ENCODE measurements at regions of chr20 and their contacts with region 1.

Region 1: GRCh38 chr20:20052074-20052970 is at the starts of genes CFAP61 and CRNKL1:
- DNase-seq: peak; percentile 96 to 100
- ATAC-seq: peak; percentile 91 to 95 (median 93)
- H3K4me3 ChIP-seq: peak within 1 kb of the TSS; percentile 66
- H3K4me3 Mint-ChIP-seq: peak within 1 kb of the TSS; percentile 100
- H3K27ac ChIP-seq: peak within 1 kb of the TSS; percentile 73
- H3K27ac Mint-ChIP-seq: peak within 1 kb of the TSS; percentile 99
- H3K4me1 ChIP-seq: peaks cover 6% of the 10 kb centered on the region
- H3K4me1 Mint-ChIP-seq: peaks cover 17 to 27% of the 10 kb centered on the region in 2 donors
- H3K27me3 ChIP-seq: no peaks in the 10 kb centered on the region
- H3K27me3 Mint-ChIP-seq: peaks cover 0 to 4% of the 10 kb centered on the region in 2 donors
- CTCF ChIP-seq: no peak
- total RNA-seq, gene CFAP61: 1.0 to 2.1 (median 1.3) TPM
- total RNA-seq, gene CRNKL1: 30.8 to 34.5 (median 31.6) TPM

Region 2: GRCh38 chr20:18287915-18288748 is 1764.2 kb before region 1 on chr20 and contains the start of gene ZNF133:
- intact Hi-C with region 1: loop called (anchors 10 kb)
- DNase-seq: peak; percentile 97 to 99
- ATAC-seq: peak; percentile 93 to 97 (median 95)
- H3K4me3 ChIP-seq: peak within 1 kb of the TSS; percentile 100
- H3K4me3 Mint-ChIP-seq: peak within 1 kb of the TSS; percentile 98
- H3K27ac ChIP-seq: peak within 1 kb of the TSS; percentile 100
- H3K27ac Mint-ChIP-seq: peak within 1 kb of the TSS; percentile 97
- H3K4me1 ChIP-seq: peaks cover 15% of the 10 kb centered on the region
- H3K4me1 Mint-ChIP-seq: peaks cover 28 to 37% of the 10 kb centered on the region in 2 donors
- H3K27me3 ChIP-seq: peaks cover 4% of the 10 kb centered on the region
- H3K27me3 Mint-ChIP-seq: peaks cover 26 to 35% of the 10 kb centered on the region in 2 donors
- CTCF ChIP-seq: no peak
- total RNA-seq, gene ZNF133: 5.2 to 9.6 (median 9.3) TPM

Region 3: GRCh38 chr20:20017001-20017843 is 35.1 kb before region 1 on chr20 and contains the start of gene NAA20:
- intact Hi-C with region 1: loop called (anchors 1 kb)
- DNase-seq: peak; percentile 84 to 94
- ATAC-seq: peak; percentile 95 to 99 (median 97)
- H3K4me3 ChIP-seq: peak within 1 kb of the TSS; percentile 74
- H3K4me3 Mint-ChIP-seq: peak within 1 kb of the TSS; percentile 91
- H3K27ac ChIP-seq: peak within 1 kb of the TSS; percentile 68
- H3K27ac Mint-ChIP-seq: peak within 1 kb of the TSS; percentile 87 to 95
- H3K4me1 ChIP-seq: peaks cover 15% of the 10 kb centered on the region
- H3K4me1 Mint-ChIP-seq: peaks cover 36 to 49% of the 10 kb centered on the region in 2 donors
- H3K27me3 ChIP-seq: no peaks in the 10 kb centered on the region
- H3K27me3 Mint-ChIP-seq: peaks cover 0 to 5% of the 10 kb centered on the region in 2 donors
- CTCF ChIP-seq: peak; percentile 72
- total RNA-seq, gene NAA20: 20.8 to 25.1 (median 23.8) TPM

Region 4: DNA sequence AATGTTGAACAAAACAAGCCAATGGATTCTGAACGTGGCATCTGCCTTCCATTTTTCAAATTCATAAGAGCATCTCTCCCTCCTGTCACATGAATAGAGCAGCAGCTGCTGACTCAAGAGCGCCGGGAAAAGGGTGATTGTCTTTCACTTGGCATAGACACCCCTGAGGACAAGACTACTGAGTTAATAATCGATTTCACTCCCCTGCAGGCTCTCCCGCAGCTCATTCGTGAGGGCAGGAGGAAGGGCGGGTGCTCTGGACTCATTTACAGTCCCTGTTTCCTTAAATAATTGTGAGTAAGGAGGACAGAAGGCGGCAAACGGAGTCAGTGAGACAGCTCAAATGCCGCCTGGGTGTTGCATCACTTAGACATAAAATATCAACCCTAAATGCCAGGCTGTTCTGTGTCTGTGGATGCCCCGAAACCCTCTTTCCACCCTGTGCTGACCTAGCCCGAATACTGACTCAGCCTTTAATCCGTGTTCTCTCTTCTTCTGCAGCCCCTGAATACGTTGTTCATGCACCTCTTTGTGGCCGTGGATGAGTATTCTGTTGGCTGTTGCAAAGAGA is 21.6 kb after region 1 on chr20:
- intact Hi-C with region 1: no loop called
- DNase-seq: no peak
- ATAC-seq: no peak
- H3K4me3 ChIP-seq: no peak overlapping the region
- H3K4me3 Mint-ChIP-seq: no peak overlapping the region
- H3K27ac ChIP-seq: no peak overlapping the region
- H3K27ac Mint-ChIP-seq: no peak overlapping the region
- H3K4me1 ChIP-seq: no peaks in the 10 kb centered on the region
- H3K4me1 Mint-ChIP-seq: no peaks in the 10 kb centered on the region
- H3K27me3 ChIP-seq: no peaks in the 10 kb centered on the region
- H3K27me3 Mint-ChIP-seq: peaks cover 12 to 15% of the 10 kb centered on the region in 2 donors
- CTCF ChIP-seq: no peak

Region 5: GRCh38 chr20:20712474-20713243 is 660.3 kb after region 1 on chr20 and contains the start of gene RALGAPA2:
- intact Hi-C with region 1: loop called (anchors 5 kb)
- DNase-seq: peak; percentile 93 to 96
- ATAC-seq: peak; percentile 92 to 98 (median 94)
- H3K4me3 ChIP-seq: peak within 1 kb of the TSS; percentile 57
- H3K4me3 Mint-ChIP-seq: peak within 1 kb of the TSS; percentile 93
- H3K27ac ChIP-seq: peak within 1 kb of the TSS; percentile 87
- H3K27ac Mint-ChIP-seq: peak within 1 kb of the TSS; percentile 89 to 94
- H3K4me1 ChIP-seq: peaks cover 17% of the 10 kb centered on the region
- H3K4me1 Mint-ChIP-seq: peaks cover 32 to 34% of the 10 kb centered on the region in 2 donors
- H3K27me3 ChIP-seq: no peaks in the 10 kb centered on the region
- H3K27me3 Mint-ChIP-seq: no peaks in the 10 kb centered on the region
- CTCF ChIP-seq: no peak
- total RNA-seq, gene RALGAPA2: 26.6 to 33.9 (median 33.1) TPM